ENCODE measurements at regions of chrX and their contacts with region 1.

Region 1: GRCh38 chrX:112642349-112642748 is 37.4 kb downstream of the LHFPL1 start:
- DNase-seq: peak; percentile 21
- ATAC-seq: peak; percentile 69
- H3K4me3 ChIP-seq: no peak overlapping the region
- H3K27ac ChIP-seq: no peak overlapping the region
- H3K4me1 ChIP-seq: no peaks in the 10 kb centered on the region
- H3K27me3 ChIP-seq: no peaks in the 10 kb centered on the region
- CTCF ChIP-seq: peak; percentile 20 to 58 (median 46); a peak in 5 of 6 replicates
- POLR2A ChIP-seq: no peak
- RAD21 ChIP-seq: peak; percentile 54

Region 2: GRCh38 chrX:111869639-111870034 is 772.7 kb before region 1 on chrX:
- CTCF ChIA-PET with region 1: interaction called, 4 read pairs
- POLR2A ChIA-PET with region 1: no interaction called
- RAD21 ChIA-PET with region 1: no interaction called
- intact Hi-C with region 1: loop called (anchors 5 kb)
- DNase-seq: peak; percentile 16
- ATAC-seq: peak; percentile 88
- H3K4me3 ChIP-seq: no peak overlapping the region
- H3K27ac ChIP-seq: no peak overlapping the region
- H3K4me1 ChIP-seq: no peaks in the 10 kb centered on the region
- H3K27me3 ChIP-seq: no peaks in the 10 kb centered on the region
- CTCF ChIP-seq: peak; percentile 37 to 58 (median 50); a peak in 5 of 6 replicates
- POLR2A ChIP-seq: no peak
- RAD21 ChIP-seq: peak; percentile 63

Region 3: DNA sequence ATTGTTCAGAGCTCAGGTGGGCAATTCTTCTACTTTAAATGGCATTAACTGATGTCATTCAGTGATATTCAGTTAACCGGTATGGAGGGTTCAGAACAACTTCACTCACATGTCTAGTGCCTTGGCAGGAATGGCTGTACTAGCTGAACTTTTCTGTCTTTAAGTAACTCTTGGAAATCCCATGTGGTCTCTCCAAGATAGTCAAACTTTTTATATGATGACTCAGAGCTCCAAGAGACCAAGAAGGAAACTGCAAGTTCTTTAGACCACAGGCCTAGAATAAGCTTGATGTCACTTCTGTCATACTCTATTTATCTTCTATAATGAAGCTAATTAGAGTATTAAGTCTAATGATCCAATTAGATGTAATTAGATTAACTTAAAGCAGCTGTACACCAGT is 12.5 kb after region 1 on chrX:
- CTCF ChIA-PET with region 1: no interaction called
- POLR2A ChIA-PET with region 1: no interaction called
- RAD21 ChIA-PET with region 1: no interaction called
- intact Hi-C with region 1: no loop called
- DNase-seq: no peak
- ATAC-seq: no peak
- H3K4me3 ChIP-seq: no peak overlapping the region
- H3K27ac ChIP-seq: no peak overlapping the region
- H3K4me1 ChIP-seq: no peaks in the 10 kb centered on the region
- H3K27me3 ChIP-seq: no peaks in the 10 kb centered on the region
- CTCF ChIP-seq: no peak
- POLR2A ChIP-seq: no peak
- RAD21 ChIP-seq: no peak

Region 4: DNA sequence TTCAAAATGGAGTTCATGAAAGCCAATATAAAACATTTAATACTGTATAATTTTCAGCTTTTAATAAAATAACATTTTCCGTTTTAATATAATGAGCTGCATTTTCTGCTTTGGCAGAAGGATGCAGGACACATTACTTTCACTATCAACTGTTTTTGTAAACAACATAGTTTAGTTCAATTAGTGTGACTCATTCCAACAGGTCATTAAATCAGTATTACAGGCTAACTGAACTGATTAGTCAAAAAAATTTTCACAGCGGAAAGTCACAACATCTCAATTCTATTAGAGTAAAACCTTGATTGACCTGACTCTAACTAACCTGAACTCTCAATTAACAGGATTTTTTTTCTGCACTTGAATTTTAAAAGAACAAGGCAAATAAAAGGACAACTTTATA is 349.5 kb after region 1 on chrX:
- CTCF ChIA-PET with region 1: no interaction called
- POLR2A ChIA-PET with region 1: no interaction called
- RAD21 ChIA-PET with region 1: no interaction called
- intact Hi-C with region 1: no loop called
- DNase-seq: no peak
- ATAC-seq: no peak
- H3K4me3 ChIP-seq: no peak overlapping the region
- H3K27ac ChIP-seq: no peak overlapping the region
- H3K4me1 ChIP-seq: no peaks in the 10 kb centered on the region
- H3K27me3 ChIP-seq: no peaks in the 10 kb centered on the region
- CTCF ChIP-seq: no peak
- POLR2A ChIP-seq: no peak
- RAD21 ChIP-seq: no peak